Naive thymus-derived CD4-positive, alpha-beta T cell (primary cell): ENCODE measurements at regions of chr1 and their contacts with region 1.

Region 1: DNA sequence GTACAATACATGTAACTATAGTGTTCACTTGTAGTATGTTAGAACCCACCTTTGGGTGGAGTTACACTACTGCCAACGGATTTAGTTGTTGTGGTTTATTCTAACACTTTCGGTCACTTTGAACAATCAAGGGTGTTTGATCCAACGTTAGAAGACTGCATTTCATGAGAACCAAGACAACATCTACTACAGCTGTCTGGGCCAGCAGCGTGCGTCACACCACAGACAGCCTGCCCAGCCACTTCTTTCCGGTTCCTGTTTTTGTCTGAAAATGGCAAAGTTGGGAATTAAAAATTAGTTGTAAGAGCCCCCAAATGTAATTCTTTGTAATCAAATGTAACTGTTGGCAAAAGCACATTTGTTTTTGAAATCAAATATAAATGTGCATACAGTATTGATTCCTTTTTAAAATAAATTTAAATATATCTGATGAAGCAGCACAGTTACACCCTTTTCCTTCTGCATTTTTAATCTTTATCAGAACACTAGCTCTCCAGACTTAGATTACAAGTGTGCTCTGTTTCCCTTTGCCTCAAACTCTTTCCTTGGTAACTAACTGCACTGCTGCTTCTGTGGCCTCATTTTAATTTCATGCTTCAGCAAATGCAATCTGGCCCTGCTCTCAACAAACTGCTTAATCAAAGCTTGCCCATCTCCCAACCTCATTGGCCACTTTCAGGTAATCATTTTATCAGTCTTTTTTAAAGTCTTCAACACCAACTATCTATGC is 86.6 kb upstream of the DPH5 start:
- DNase-seq: peak; percentile 29 to 95 (median 91)
- ATAC-seq: peak; percentile 97
- H3K4me3 ChIP-seq: peak overlapping the region; percentile 33
- H3K4me3 Mint-ChIP-seq: peak overlapping the region; percentile 32 to 85 (median 78)
- H3K27ac ChIP-seq: peak overlapping the region; percentile 84
- H3K27ac Mint-ChIP-seq: peak overlapping the region; percentile 95 to 100 (median 99)
- H3K4me1 ChIP-seq: peaks cover 23 to 43% of the 10 kb centered on the region in 2 donors
- H3K4me1 Mint-ChIP-seq: peaks cover 32 to 79% (median 71%) of the 10 kb centered on the region in 7 donors
- H3K27me3 ChIP-seq: no peaks in the 10 kb centered on the region
- H3K27me3 Mint-ChIP-seq: no peaks in the 10 kb centered on the region

Region 2: GRCh38 chr1:100799954-100800612 is 312.1 kb before region 1 on chr1:
- CTCF ChIA-PET with region 1: no interaction called
- POLR2A ChIA-PET with region 1: no interaction called
- intact Hi-C with region 1: no loop called
- DNase-seq: no peak
- ATAC-seq: no peak
- H3K4me3 ChIP-seq: no peak overlapping the region
- H3K4me3 Mint-ChIP-seq: no peak overlapping the region
- H3K27ac ChIP-seq: no peak overlapping the region
- H3K27ac Mint-ChIP-seq: no peak overlapping the region
- H3K4me1 ChIP-seq: no peaks in the 10 kb centered on the region
- H3K4me1 Mint-ChIP-seq: no peaks in the 10 kb centered on the region
- H3K27me3 ChIP-seq: no peaks in the 10 kb centered on the region
- H3K27me3 Mint-ChIP-seq: peaks cover 7 to 31% (median 10%) of the 10 kb centered on the region in 5 donors

Region 3: DNA sequence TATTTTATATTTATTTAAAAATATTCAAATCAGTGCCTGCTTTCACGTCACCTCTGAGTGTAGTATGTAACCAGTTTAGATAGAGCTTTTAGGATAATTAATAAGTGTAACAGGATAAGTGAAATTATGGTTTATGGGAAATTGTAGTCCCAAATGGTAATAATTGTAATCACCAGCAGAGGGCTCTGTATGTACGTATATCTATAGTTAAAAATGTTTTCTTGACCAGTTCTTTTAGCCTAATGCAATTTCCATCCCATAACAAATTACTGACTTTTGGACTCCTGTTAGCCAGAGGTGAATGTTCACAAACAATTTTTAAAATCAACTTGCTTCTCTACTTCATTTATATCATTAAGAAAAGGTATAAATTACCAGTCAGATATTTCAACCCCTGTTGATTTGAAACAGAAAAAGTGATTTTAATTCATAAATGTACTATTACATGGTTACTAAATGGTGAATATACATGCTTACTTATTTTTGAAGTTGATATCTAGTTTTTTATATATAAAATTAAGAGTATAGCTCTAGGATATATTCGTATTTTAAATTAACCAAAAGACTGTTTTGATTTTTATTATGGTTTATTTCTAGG is 191.0 kb before region 1 on chr1:
- CTCF ChIA-PET with region 1: interaction called, 4 read pairs
- POLR2A ChIA-PET with region 1: interaction called, 5 read pairs
- intact Hi-C with region 1: loop called (anchors 1 to 2 kb)
- DNase-seq: peak in 6 of 9 donors; percentile 35 to 62 (median 50)
- ATAC-seq: peak; percentile 77
- H3K4me3 ChIP-seq: no peak overlapping the region
- H3K4me3 Mint-ChIP-seq: peak overlapping the region in 1 of 10 donors; percentile 6
- H3K27ac ChIP-seq: peak overlapping the region; percentile 38
- H3K27ac Mint-ChIP-seq: peak overlapping the region in 8 of 9 donors; percentile 28 to 92 (median 88)
- H3K4me1 ChIP-seq: peaks cover 27 to 37% of the 10 kb centered on the region in 2 donors
- H3K4me1 Mint-ChIP-seq: peaks cover 13 to 62% (median 43%) of the 10 kb centered on the region in 7 donors
- H3K27me3 ChIP-seq: no peaks in the 10 kb centered on the region
- H3K27me3 Mint-ChIP-seq: no peaks in the 10 kb centered on the region

Region 4: GRCh38 chr1:101081496-101082488 is 30.4 kb before region 1 on chr1:
- CTCF ChIA-PET with region 1: no interaction called
- POLR2A ChIA-PET with region 1: interaction called, 6 read pairs
- intact Hi-C with region 1: loop called in 1 of 2 experiments (anchors 2 kb)
- DNase-seq: peak in 7 of 9 donors; percentile 24 to 49 (median 40)
- ATAC-seq: peak; percentile 95
- H3K4me3 ChIP-seq: no peak overlapping the region
- H3K4me3 Mint-ChIP-seq: peak overlapping the region; percentile 42 to 79 (median 72)
- H3K27ac ChIP-seq: no peak overlapping the region
- H3K27ac Mint-ChIP-seq: peak overlapping the region; percentile 69 to 95 (median 82)
- H3K4me1 ChIP-seq: peaks cover 29 to 31% of the 10 kb centered on the region in 2 donors
- H3K4me1 Mint-ChIP-seq: peaks cover 29 to 63% (median 57%) of the 10 kb centered on the region in 7 donors
- H3K27me3 ChIP-seq: no peaks in the 10 kb centered on the region
- H3K27me3 Mint-ChIP-seq: no peaks in the 10 kb centered on the region

Region 5: DNA sequence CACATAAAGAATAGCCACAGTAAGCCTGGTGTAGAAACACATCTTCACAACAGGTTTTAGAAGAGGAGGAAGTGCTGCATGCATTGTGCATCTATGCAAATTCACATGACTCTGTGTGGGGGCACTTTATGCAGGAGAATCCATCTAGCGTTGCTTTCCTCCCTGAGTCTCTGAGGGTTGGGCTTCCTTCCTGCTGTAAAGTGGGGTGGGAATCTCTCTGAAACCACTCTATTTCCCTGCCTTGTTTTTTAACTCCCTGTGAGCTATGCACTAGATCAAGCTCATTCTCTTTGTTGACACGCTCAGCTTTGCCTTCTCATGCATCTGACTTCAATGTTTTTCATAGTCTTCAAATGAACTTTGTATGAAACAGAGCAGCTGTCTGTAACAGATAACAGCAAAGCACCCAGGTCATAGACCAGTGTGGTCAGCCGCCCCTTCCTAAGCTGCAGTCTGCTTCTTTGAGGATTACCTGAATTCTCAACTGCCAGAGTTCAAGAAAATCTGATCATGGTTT is 16.1 kb after region 1 on chr1:
- CTCF ChIA-PET with region 1: interaction called, 11 read pairs
- POLR2A ChIA-PET with region 1: interaction called, 23 read pairs
- intact Hi-C with region 1: loop called (anchors 1 to 2 kb)
- DNase-seq: peak in 7 of 9 donors; percentile 38 to 72 (median 60)
- ATAC-seq: peak; percentile 79
- H3K4me3 ChIP-seq: no peak overlapping the region
- H3K4me3 Mint-ChIP-seq: peak overlapping the region; percentile 17 to 80 (median 72)
- H3K27ac ChIP-seq: peak overlapping the region; percentile 64
- H3K27ac Mint-ChIP-seq: peak overlapping the region; percentile 85 to 96 (median 91)
- H3K4me1 ChIP-seq: peaks cover 26 to 49% of the 10 kb centered on the region in 2 donors
- H3K4me1 Mint-ChIP-seq: peaks cover 42 to 83% (median 66%) of the 10 kb centered on the region in 7 donors
- H3K27me3 ChIP-seq: no peaks in the 10 kb centered on the region
- H3K27me3 Mint-ChIP-seq: no peaks in the 10 kb centered on the region

Region 6: DNA sequence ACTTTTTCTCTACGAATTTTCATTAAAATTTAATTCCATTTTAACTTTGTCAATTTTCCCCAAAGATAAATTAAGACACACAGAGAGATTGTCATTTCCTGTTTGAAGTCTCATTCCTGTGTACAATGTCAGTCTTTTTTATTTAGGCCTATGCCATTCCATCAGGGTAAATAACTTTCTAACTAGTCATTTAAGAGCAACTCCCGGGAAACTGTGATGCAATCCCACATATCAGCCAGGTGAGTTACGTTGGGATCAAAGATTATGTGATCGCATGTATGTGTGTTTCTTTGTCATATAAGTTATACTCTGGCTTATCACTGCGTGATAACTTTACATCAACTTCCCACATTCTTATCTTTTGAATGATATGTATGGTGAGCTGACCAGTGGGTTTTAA is 38.5 kb after region 1 on chr1:
- CTCF ChIA-PET with region 1: no interaction called
- POLR2A ChIA-PET with region 1: no interaction called
- intact Hi-C with region 1: no loop called
- DNase-seq: no peak
- ATAC-seq: no peak
- H3K4me3 ChIP-seq: no peak overlapping the region
- H3K4me3 Mint-ChIP-seq: no peak overlapping the region
- H3K27ac ChIP-seq: no peak overlapping the region
- H3K27ac Mint-ChIP-seq: peak overlapping the region in 2 of 9 donors; percentile 33 to 35
- H3K4me1 ChIP-seq: no peaks in the 10 kb centered on the region
- H3K4me1 Mint-ChIP-seq: peaks cover 0 to 30% (median 11%) of the 10 kb centered on the region in 7 donors
- H3K27me3 ChIP-seq: no peaks in the 10 kb centered on the region
- H3K27me3 Mint-ChIP-seq: no peaks in the 10 kb centered on the region

Region 7: DNA sequence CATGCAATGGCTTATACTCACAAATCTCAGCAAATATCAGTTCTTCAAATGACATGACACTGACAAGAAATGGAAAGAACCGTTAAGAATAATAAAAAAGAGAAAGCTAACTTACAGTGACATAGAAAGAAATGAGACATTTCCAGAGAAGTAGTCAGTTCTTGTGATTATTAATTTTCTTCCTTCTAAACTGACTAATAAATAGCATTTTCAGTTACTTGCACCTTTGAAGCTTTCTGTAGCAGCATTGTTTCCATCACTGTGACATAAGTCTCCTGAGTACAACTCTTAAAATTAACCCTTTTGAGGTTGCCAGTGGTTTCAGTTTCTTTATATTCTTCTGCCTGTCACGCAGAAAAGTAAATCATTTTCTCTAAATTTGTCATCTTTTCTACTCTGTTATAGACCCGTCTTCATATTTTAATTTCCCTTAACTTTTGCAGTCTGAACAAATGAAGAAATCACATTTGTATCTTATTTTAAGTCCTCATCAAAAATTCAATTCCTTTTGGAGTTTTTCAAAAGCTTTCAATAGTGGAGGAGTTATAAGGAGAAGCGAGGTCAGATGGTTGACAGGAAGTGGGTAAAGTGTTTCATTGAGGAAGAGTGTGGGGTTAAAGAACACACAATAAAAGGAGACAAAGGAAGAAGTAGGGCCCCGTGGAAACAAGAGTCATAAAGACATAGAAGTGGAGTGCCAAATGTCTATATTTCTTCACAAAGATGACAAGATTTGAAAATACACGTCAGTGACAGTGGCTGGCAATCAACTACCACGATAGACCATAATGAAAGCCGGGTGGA is 66.7 kb after region 1 on chr1:
- CTCF ChIA-PET with region 1: no interaction called
- POLR2A ChIA-PET with region 1: no interaction called
- intact Hi-C with region 1: loop called in 1 of 2 experiments (anchors 2 kb)
- DNase-seq: peak in 7 of 9 donors; percentile 40 to 61 (median 46)
- ATAC-seq: peak; percentile 78
- H3K4me3 ChIP-seq: peak overlapping the region; percentile 3
- H3K4me3 Mint-ChIP-seq: peak overlapping the region; percentile 63 to 90 (median 80)
- H3K27ac ChIP-seq: peak overlapping the region; percentile 60
- H3K27ac Mint-ChIP-seq: peak overlapping the region; percentile 86 to 98 (median 92)
- H3K4me1 ChIP-seq: peaks cover 12 to 20% of the 10 kb centered on the region in 2 donors
- H3K4me1 Mint-ChIP-seq: peaks cover 24 to 69% (median 51%) of the 10 kb centered on the region in 7 donors
- H3K27me3 ChIP-seq: no peaks in the 10 kb centered on the region
- H3K27me3 Mint-ChIP-seq: no peaks in the 10 kb centered on the region